CD14-positive monocyte (primary cell): ENCODE measurements at regions of chr12 and their contacts with region 1.

Region 1: DNA sequence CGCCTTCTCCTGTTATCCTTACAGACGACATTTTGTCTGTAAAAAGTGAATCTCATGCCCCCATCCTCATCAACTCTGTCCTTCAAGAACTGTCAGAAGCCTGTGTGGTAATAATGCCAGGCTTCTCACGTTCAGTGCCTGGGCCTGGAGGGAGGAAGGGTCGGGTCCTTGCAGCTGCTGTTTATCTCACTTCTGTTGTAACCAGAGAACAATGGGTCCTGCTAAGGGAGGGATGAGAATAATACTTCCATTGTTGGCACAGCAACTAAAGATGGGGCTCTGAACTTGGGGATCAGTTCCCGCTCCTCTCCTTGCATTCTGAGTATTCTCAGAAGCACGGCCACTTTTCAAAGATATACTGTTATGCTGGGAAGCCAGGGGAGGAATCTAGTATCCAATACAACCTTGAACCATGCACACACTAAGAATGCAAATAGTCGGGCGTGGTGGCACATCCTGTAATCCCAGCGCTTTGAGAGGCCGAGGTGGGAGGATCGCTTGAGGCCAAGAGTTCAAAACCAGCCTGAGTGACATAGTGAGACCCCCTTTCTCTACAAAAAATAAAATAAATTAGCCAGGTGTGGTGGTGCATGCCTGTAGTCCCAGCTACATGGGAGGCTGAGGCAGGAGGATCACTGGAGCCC is 38.8 kb upstream of the NINJ2 start:
- DNase-seq: no peak
- H3K4me3 ChIP-seq: no peak overlapping the region
- H3K4me3 Mint-ChIP-seq: no peak overlapping the region
- H3K27ac ChIP-seq: no peak overlapping the region
- H3K27ac Mint-ChIP-seq: peak overlapping the region in 1 of 7 donors; percentile 14
- H3K4me1 ChIP-seq: peaks cover 14 to 26% of the 10 kb centered on the region in 2 donors
- H3K4me1 Mint-ChIP-seq: peaks cover 24% of the 10 kb centered on the region
- H3K27me3 ChIP-seq: no peaks in the 10 kb centered on the region
- H3K27me3 Mint-ChIP-seq: peaks cover 0 to 2% (median 2%) of the 10 kb centered on the region in 3 donors
- CTCF ChIP-seq: no peak

Region 2: GRCh38 chr12:304805-305204 is 397.2 kb before region 1 on chr12:
- intact Hi-C with region 1: no loop called
- DNase-seq: no peak
- H3K4me3 ChIP-seq: no peak overlapping the region
- H3K4me3 Mint-ChIP-seq: no peak overlapping the region
- H3K27ac ChIP-seq: no peak overlapping the region
- H3K27ac Mint-ChIP-seq: no peak overlapping the region
- H3K4me1 ChIP-seq: no peaks in the 10 kb centered on the region
- H3K4me1 Mint-ChIP-seq: peaks cover 4% of the 10 kb centered on the region
- H3K27me3 ChIP-seq: no peaks in the 10 kb centered on the region
- H3K27me3 Mint-ChIP-seq: no peaks in the 10 kb centered on the region
- CTCF ChIP-seq: no peak

Region 3: DNA sequence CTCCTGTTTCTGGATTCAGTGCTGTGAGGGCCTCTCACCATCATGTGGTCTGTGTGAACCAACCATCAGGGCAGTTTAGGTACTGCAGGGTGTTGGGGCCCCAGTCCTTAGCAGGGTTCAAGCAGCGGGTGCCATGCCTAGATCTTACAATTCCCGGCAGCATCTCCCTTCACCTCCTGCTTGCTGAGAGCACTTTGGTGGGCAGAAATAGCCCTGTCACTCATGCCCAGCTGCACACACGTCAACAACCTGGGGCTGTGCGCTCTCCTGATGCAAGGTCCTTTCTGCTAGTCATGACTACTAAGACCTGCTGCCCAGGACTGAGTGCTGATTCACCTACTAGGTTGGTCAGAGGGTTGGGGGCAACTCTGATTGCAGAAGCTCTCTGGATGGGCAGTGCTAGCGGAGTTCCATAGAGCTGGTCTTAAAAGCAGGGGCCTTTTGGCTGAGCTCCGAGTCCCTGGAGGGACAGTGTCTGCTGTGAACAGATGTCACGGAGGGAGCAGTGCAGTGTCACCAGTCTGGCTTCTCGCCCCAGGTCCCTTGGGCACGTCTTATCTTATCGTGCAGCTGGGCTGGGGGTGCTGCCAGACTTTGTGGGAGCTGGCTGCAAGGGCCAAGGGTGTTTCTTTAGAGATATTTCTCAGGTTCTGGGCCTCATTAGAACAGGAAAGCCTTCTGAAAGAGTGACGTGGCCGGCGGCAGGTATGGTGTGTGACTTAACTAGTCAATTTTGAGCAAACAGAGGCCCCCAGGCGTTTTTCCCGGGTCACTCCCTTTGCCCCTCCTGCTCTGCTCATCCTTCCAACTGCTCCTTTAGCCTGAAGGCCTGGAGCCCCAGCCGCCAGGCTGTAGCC is 110.6 kb before region 1 on chr12:
- intact Hi-C with region 1: no loop called
- DNase-seq: peak; percentile 33 to 68 (median 33)
- H3K4me3 ChIP-seq: no peak overlapping the region
- H3K4me3 Mint-ChIP-seq: peak overlapping the region in 1 of 2 donors; percentile 62
- H3K27ac ChIP-seq: no peak overlapping the region
- H3K27ac Mint-ChIP-seq: peak overlapping the region in 5 of 7 donors; percentile 12 to 77 (median 18)
- H3K4me1 ChIP-seq: peaks cover 36 to 42% of the 10 kb centered on the region in 2 donors
- H3K4me1 Mint-ChIP-seq: peaks cover 44% of the 10 kb centered on the region
- H3K27me3 ChIP-seq: no peaks in the 10 kb centered on the region
- H3K27me3 Mint-ChIP-seq: peaks cover 0 to 1% (median 0%) of the 10 kb centered on the region in 3 donors
- CTCF ChIP-seq: peak; percentile 30

Region 4: GRCh38 chr12:650983-651382 is 51.0 kb before region 1 on chr12:
- intact Hi-C with region 1: loop called in 1 of 2 experiments (anchors 10 kb)
- DNase-seq: no peak
- H3K4me3 ChIP-seq: no peak overlapping the region
- H3K4me3 Mint-ChIP-seq: no peak overlapping the region
- H3K27ac ChIP-seq: peak overlapping the region in 1 of 2 donors; percentile 39
- H3K27ac Mint-ChIP-seq: peak overlapping the region in 5 of 7 donors; percentile 28 to 77 (median 68)
- H3K4me1 ChIP-seq: peaks cover 10 to 11% of the 10 kb centered on the region in 2 donors
- H3K4me1 Mint-ChIP-seq: peaks cover 14% of the 10 kb centered on the region
- H3K27me3 ChIP-seq: no peaks in the 10 kb centered on the region
- H3K27me3 Mint-ChIP-seq: peaks cover 1 to 5% (median 1%) of the 10 kb centered on the region in 3 donors
- CTCF ChIP-seq: no peak